Activated naive CD4-positive, alpha-beta T cell treated with anti-CD3 and anti-CD28 coated beads for 36 hours (primary cell): ENCODE measurements at regions of chr1 and their contacts with region 1.

Region 1: DNA sequence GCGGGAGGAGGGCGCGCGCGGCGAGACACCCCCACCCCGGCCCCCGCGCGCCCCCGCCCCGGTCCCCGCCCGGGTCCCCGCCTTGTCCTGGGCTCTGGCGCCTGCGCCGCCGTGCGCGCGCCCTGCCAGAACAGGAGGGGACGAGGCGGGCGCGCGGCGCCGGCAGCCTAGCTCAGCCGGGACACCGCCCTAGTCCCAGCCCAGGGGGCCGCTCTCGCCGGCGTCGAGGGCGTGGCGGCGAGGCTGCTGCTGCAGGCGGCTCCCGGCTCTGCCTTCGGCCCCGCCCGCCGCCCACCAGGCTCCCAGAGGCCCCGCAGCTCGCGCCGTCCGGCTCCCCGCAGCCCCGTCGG is at the start of gene RCAN3:
- DNase-seq: peak; percentile 87
- H3K4me3 Mint-ChIP-seq: peak within 1 kb of the TSS; percentile 100
- H3K27ac Mint-ChIP-seq: peak within 1 kb of the TSS; percentile 93
- H3K4me1 Mint-ChIP-seq: peaks cover 49% of the 10 kb centered on the region
- H3K27me3 Mint-ChIP-seq: no peaks in the 10 kb centered on the region
- total RNA-seq, gene RCAN3: 70.8 to 71.9 TPM

Region 2: GRCh38 chr1:24491577-24492360 is 10.9 kb before region 1 on chr1:
- CTCF ChIA-PET with region 1: interaction called, 19 read pairs
- intact Hi-C with region 1: loop called (anchors 1 kb)
- DNase-seq: no peak
- H3K4me3 Mint-ChIP-seq: no peak overlapping the region
- H3K27ac Mint-ChIP-seq: no peak overlapping the region
- H3K4me1 Mint-ChIP-seq: peaks cover 50% of the 10 kb centered on the region
- H3K27me3 Mint-ChIP-seq: no peaks in the 10 kb centered on the region

Region 3: DNA sequence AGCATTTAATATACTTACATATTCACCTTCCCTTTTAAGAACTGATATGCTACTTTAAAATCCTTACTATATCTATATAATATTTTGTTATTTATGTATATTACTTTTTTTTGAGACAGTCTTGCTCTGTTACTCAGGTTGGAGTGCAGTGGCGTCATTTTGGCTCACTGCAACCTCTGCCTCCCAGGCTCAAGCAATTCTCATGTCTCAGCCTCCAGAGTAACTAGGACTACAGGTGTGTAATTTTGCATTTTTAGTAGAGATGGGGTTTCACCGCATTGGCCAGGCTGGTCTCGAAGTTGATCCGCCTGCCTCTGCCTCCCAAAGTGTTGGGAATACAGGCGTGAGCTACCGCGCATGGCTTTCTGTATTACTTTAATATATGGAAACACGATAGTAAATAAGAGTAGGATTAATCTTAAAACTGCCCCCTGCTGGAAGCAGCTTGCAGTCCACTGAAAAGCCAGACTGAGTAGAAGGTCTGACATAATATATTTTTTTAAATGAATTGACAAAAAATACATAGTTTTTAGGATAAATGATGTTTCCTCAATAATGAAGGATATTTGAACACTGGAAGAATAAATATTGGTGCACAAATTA is 24.4 kb after region 1 on chr1:
- CTCF ChIA-PET with region 1: interaction called, 16 read pairs
- intact Hi-C with region 1: loop called (anchors 2 kb)
- DNase-seq: peak; percentile 74
- H3K4me3 Mint-ChIP-seq: no peak overlapping the region
- H3K27ac Mint-ChIP-seq: peak overlapping the region; percentile 63
- H3K4me1 Mint-ChIP-seq: peaks cover 70% of the 10 kb centered on the region
- H3K27me3 Mint-ChIP-seq: no peaks in the 10 kb centered on the region

Region 4: DNA sequence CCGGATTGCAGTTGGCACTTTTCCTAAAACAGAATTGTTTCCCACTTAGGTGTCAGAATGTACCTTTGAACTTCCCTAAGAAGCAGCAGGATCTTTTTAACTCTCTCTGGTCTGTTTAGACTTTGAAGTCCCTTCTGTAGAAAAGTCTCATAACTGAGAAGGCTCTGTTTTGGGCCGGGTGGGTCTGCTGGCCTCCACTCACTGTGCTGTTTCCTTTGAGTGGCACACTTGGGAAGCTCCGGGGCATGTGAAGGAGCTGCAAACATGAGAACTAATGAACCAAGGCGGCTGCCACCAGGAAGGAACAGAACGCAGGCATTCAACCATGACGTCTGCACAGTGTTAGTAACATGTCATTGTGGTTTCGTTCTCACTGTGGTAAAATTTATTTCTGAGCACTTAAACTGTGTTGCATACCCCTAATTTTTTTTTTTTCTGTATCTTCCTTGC is 33.7 kb after region 1 on chr1:
- CTCF ChIA-PET with region 1: interaction called, 6 read pairs
- intact Hi-C with region 1: loop called (anchors 1 kb)
- DNase-seq: peak; percentile 84
- H3K4me3 Mint-ChIP-seq: peak overlapping the region; percentile 67
- H3K27ac Mint-ChIP-seq: peak overlapping the region; percentile 97
- H3K4me1 Mint-ChIP-seq: peaks cover 84% of the 10 kb centered on the region
- H3K27me3 Mint-ChIP-seq: no peaks in the 10 kb centered on the region

Region 5: DNA sequence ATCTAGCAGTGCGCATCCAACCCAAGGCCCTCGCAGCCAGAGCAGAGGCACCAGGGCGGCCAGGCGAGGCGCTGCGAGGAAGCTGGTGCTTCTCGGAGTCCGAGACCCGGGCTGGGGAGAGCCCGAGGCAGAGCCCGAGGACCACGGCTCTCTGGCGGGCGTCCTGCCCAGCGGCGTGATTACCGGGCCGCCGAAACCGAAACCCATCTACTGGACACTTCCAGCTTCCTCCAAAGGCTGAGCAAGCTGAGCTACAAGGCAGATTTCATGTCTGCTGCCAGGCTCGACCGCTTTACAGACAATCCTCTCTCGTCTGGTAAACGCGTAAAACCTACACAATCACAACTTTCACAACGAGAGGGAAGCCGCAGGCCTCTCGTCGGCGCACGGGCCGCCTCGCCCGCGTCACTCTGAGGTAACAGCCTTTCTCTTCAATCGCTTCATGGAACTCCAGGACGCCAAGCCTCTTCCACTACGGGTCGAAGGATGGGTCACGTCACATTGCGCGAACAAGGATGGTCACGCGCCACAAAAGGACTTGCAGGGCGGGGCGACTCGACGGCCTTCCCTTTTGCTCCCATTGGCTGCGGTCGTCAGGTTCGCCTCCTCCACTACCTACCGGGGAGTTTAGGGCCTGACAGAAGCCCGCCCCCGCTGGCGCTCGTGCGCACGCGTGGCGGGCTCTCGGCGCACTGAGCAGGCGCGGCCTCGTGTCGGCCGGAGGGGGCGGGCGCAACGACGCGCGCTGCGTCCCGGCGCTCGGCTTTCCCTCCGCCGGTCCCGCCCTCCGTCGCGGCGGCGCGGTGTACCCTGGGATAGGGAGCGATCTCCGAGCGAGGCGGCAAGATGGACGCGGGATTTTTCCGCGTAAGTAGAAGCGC is 140.0 kb after region 1 on chr1 and contains the start of gene SRRM1:
- CTCF ChIA-PET with region 1: no interaction called
- intact Hi-C with region 1: loop called (anchors 1 kb)
- DNase-seq: peak; percentile 100
- H3K4me3 Mint-ChIP-seq: peak within 1 kb of the TSS; percentile 83
- H3K27ac Mint-ChIP-seq: peak within 1 kb of the TSS; percentile 98
- H3K4me1 Mint-ChIP-seq: peaks cover 48% of the 10 kb centered on the region
- H3K27me3 Mint-ChIP-seq: no peaks in the 10 kb centered on the region
- total RNA-seq, gene SRRM1: 226 to 235 TPM